ENCODE measurements at regions of chr11 and their contacts with region 1.

Region 1: DNA sequence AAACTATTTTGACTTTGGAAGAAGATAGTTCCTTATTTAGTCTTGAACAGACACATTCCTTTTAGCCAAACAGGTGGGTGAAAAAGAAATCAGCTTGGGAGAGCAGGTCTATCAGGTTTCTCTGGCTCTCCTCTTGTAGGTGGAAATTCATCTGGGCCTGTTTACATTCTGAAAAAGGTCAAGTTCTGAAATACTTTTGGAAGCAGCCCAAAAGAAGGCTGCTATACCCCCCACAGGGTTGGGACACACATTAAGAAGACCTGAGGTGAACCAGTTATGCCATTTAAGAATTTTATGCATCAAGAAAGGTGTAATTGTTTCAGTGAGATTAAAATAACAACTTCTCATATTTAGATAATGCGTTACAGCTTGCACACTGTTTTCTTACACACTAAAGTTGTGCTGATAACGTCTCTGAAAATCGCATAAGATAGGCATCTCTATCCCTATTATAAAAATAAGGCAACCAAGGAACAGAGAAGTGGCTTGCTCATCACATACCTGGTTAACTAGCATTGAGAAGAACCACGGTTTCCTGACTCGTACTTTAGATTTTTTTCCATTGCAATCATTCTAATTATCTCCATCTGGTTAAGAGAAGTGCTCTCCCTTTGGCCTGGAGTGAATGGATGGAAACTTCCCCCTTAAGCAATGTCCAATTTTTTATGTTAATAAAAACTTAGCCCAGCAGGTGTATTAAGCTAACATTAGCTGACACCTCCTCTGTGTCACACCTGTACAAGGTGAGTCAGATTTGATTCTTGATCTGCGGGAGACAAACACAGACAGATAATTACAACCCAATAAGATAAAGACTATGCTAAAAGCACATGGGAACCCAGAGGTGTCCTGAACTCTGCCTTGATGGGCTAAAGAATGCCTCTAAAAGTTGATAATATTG is 60.5 kb upstream of the UCP3 start:
- DNase-seq: no peak
- ATAC-seq: peak; percentile 46 to 61 (median 58)
- H3K4me3 ChIP-seq: no peak overlapping the region
- H3K27ac ChIP-seq: peak overlapping the region; percentile 77
- H3K4me1 ChIP-seq: peaks cover 43% of the 10 kb centered on the region
- H3K27me3 ChIP-seq: no peaks in the 10 kb centered on the region
- CTCF ChIP-seq: no peak

Region 2: DNA sequence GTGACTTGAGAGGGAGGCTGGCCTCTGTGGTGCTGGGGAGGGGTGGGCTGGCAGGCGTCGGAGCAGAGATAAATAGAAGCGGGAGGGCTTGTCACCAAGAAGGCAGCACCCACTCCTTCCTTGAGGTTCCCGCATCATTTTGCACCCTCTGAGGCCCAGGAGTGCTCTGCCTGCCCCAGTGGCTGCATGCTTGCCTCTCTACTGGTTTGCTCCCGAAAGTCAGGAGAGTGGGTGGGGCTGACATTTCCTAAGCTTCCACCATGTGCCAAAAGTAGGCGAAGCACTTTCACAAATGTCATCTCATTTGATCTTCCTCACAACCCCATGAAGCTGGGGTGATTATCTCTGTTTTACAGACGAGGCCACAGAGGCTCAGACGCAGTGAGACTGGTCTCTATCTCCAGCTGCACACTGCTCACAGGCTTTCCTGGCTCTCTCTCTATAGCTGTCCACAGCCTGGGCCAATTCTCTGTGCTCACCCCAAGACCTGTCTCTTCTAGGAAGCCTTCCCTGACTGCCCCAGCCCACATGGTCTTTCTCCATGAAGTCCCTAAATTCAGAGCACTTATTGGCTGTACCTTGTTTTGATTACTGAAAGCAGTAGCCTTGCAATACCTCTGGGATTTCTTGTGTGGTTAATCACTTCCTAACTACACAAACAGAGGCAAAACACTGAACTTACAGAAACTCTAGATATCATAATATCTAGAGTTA is 57.9 kb before region 1 on chr11:
- intact Hi-C with region 1: loop called in 1 of 2 experiments (anchors 5 kb)
- DNase-seq: no peak
- ATAC-seq: no peak
- H3K4me3 ChIP-seq: no peak overlapping the region
- H3K27ac ChIP-seq: peak overlapping the region; percentile 98
- H3K4me1 ChIP-seq: peaks cover 28% of the 10 kb centered on the region
- H3K27me3 ChIP-seq: no peaks in the 10 kb centered on the region
- CTCF ChIP-seq: no peak

Measured in psoas muscle (tissue), 8 donors.